Breast epithelium (tissue), 4 donors: ENCODE measurements at regions of chr19 and their contacts with region 1.

Region 1: DNA sequence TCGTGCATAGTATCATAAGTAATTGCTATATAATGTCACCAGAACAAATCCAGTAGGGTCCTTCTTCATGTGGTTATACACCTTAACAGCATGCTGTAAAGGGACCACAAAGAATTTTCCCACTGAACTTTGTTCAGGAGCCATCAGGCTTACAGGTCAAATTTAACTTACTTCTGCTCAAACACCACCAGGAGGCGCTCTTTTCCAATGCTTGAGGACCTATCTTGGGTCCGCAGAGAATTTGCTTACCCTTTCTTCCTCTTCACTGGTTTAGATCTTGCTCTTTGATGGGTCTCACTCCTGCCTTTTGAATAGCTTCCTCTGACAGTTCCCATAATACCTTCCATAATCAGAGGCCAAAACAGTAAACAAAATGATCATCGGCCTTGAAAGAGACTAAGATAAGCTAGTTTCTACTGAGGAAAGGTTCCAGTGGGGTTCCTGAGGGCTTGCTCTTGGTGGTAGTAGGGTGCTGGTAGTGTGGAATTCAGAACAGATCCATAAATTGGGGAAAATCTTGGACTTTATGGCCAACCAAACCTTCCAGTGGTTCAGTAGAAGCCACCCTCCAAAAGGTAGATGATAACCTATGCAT is 37.4 kb downstream of the SCGB2B2 start:
- DNase-seq: no peak
- H3K4me3 ChIP-seq: no peak overlapping the region
- H3K27ac ChIP-seq: no peak overlapping the region
- H3K4me1 ChIP-seq: no peaks in the 10 kb centered on the region
- H3K27me3 ChIP-seq: no peaks in the 10 kb centered on the region
- CTCF ChIP-seq: peak; percentile 26 to 68 (median 67)
- POLR2A ChIP-seq: no peak

Region 2: DNA sequence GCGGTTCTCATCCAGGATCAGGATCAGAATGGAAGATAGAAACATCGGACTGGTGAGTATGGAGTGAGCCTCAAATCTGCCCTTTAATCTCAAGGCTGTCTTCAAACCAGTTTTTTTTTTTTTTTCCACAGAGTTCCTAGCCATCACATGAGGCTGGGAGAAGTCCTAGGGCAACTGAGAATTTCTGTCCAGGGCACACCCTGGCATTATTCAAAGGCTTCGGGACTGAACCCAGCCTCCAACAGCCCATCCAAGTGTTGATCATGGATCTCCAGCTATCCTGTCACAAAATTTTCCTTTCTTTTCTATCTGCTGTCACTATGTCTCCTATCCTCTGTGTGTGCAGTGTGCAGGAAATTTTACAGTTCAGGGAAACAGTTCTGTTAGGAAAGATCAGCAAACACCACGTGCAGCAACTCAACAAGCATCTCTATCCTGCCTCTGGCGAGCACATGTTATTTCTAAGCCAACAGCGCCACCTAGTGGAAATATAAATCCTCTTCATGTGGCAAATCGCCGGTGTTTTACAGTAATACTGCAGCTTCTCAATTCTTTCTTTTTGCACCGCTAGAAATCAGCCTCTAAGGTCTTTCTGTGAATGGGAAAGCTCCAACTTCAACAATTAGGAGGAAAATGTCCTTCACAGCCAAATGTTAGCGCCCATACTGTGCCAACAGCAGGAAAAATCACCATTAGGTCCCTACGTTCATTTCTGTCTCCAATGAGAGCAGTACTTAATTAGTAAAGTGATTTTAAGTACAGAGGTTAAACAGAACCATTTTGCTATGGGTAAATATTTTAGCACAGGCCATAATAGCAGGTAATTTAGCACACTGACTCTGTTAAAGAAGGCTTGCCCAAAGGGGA is 73.0 kb after region 1 on chr19:
- intact Hi-C with region 1: loop called (anchors 2 kb)
- DNase-seq: no peak
- H3K4me3 ChIP-seq: no peak overlapping the region
- H3K27ac ChIP-seq: no peak overlapping the region
- H3K4me1 ChIP-seq: no peaks in the 10 kb centered on the region
- H3K27me3 ChIP-seq: no peaks in the 10 kb centered on the region
- CTCF ChIP-seq: peak; percentile 65 to 81 (median 79)
- POLR2A ChIP-seq: no peak